Caco-2 (cell line): ENCODE measurements at regions of chr1 and their contacts with region 1.

Region 1: DNA sequence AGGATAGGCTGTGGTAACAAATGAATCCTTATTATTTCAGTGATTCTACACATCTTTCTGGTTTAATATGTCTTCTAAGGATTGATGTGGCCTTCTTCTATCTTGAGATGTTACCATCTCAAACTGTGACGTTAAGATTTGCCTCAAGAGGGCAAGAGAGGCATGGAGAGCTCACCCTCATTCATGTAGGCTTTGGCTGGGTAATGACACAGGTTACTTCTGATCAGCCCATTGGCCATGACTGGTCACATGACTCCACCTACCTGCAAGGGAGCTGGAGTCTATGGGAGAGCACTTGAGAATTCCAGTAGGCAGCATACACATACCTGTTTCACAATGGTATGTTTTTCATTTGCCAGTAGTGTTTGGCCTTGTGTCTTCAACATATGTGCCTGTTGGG is 30.0 kb downstream of the CACHD1 start:
- DNase-seq: peak; percentile 68 to 82
- H3K4me3 ChIP-seq: no peak overlapping the region
- H3K4me3 Mint-ChIP-seq: no peak overlapping the region
- H3K27ac Mint-ChIP-seq: no peak overlapping the region
- H3K4me1 ChIP-seq: no peaks in the 10 kb centered on the region
- H3K4me1 Mint-ChIP-seq: no peaks in the 10 kb centered on the region
- H3K27me3 ChIP-seq: no peaks in the 10 kb centered on the region
- H3K27me3 Mint-ChIP-seq: no peaks in the 10 kb centered on the region
- CTCF ChIP-seq: peak in 1 of 2 experiments; percentile 21

Region 2: GRCh38 chr1:64598100-64598571 is 98.2 kb after region 1 on chr1:
- CTCF ChIA-PET with region 1: no interaction called
- POLR2A ChIA-PET with region 1: no interaction called
- intact Hi-C with region 1: loop called (anchors 5 kb)
- DNase-seq: peak; percentile 30 to 62
- H3K4me3 ChIP-seq: peak overlapping the region; percentile 5; the same call in 1 of the 2 replicates
- H3K4me3 Mint-ChIP-seq: peak overlapping the region; percentile 50
- H3K27ac Mint-ChIP-seq: peak overlapping the region; percentile 91
- H3K4me1 ChIP-seq: peaks cover 46% of the 10 kb centered on the region
- H3K4me1 Mint-ChIP-seq: peaks cover 46% of the 10 kb centered on the region
- H3K27me3 ChIP-seq: no peaks in the 10 kb centered on the region
- H3K27me3 Mint-ChIP-seq: no peaks in the 10 kb centered on the region
- CTCF ChIP-seq: no peak

Region 3: GRCh38 chr1:64675718-64676345 is 175.9 kb after region 1 on chr1:
- CTCF ChIA-PET with region 1: no interaction called
- POLR2A ChIA-PET with region 1: no interaction called
- intact Hi-C with region 1: loop called (anchors 5 kb)
- DNase-seq: peak in 1 of 2 experiments; percentile 3
- H3K4me3 ChIP-seq: no peak overlapping the region
- H3K4me3 Mint-ChIP-seq: no peak overlapping the region
- H3K27ac Mint-ChIP-seq: no peak overlapping the region
- H3K4me1 ChIP-seq: no peaks in the 10 kb centered on the region
- H3K4me1 Mint-ChIP-seq: no peaks in the 10 kb centered on the region
- H3K27me3 ChIP-seq: no peaks in the 10 kb centered on the region
- H3K27me3 Mint-ChIP-seq: no peaks in the 10 kb centered on the region
- CTCF ChIP-seq: peak; percentile 29 to 52

Region 4: DNA sequence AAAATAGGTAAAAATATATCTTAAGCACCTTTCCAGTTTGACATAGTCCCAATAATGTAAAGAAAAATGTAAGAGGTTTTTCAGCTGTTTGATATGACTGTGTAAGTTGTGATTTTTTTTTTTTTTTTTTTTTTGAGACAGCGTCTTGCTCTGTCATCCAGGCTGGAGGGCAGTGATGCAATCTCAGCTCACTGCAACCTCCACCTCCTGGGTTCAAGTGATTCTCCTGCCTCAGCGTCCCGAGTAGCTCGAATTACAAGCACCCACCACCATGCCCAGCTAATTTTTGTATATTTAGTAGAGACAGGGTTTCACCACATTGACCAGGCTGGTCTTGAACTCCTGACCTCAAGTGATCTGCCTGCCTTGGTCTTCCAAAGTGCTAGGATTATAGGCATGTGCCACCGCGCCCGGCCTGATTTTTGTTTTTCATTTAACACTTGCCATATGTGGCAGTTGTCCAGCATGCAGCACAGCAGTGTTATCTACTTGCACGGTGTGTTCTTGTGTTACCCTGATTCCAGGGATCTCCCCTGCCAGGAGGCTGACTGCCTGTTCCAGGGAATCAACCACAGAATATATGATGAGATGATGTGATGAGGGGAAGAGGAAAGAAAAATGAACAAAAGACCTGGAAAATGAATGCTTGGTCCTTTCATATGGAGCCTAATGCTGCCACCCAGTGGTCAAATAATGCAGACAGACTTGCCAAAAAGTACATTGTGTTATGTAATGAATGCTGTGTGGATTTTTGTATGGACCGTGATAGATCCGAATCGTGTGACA is 323.9 kb after region 1 on chr1:
- CTCF ChIA-PET with region 1: no interaction called
- POLR2A ChIA-PET with region 1: no interaction called
- intact Hi-C with region 1: loop called (anchors 5 kb)
- DNase-seq: peak; percentile 56 to 60
- H3K4me3 ChIP-seq: no peak overlapping the region
- H3K4me3 Mint-ChIP-seq: no peak overlapping the region
- H3K27ac Mint-ChIP-seq: no peak overlapping the region
- H3K4me1 ChIP-seq: no peaks in the 10 kb centered on the region
- H3K4me1 Mint-ChIP-seq: peaks cover 12% of the 10 kb centered on the region
- H3K27me3 ChIP-seq: no peaks in the 10 kb centered on the region
- H3K27me3 Mint-ChIP-seq: no peaks in the 10 kb centered on the region
- CTCF ChIP-seq: peak; percentile 41 to 60